PC-9 (cell line): ENCODE measurements at regions of chr1 and their contacts with region 1.

Region 1: GRCh38 chr1:233759605-233760004 is 144.9 kb upstream of the SLC35F3 start:
- DNase-seq: peak; percentile 2 to 79
- H3K4me3 ChIP-seq: no peak overlapping the region
- H3K27ac ChIP-seq: no peak overlapping the region
- H3K4me1 ChIP-seq: peaks cover 12% of the 10 kb centered on the region
- H3K27me3 ChIP-seq: no peaks in the 10 kb centered on the region
- CTCF ChIP-seq: no peak

Region 2: DNA sequence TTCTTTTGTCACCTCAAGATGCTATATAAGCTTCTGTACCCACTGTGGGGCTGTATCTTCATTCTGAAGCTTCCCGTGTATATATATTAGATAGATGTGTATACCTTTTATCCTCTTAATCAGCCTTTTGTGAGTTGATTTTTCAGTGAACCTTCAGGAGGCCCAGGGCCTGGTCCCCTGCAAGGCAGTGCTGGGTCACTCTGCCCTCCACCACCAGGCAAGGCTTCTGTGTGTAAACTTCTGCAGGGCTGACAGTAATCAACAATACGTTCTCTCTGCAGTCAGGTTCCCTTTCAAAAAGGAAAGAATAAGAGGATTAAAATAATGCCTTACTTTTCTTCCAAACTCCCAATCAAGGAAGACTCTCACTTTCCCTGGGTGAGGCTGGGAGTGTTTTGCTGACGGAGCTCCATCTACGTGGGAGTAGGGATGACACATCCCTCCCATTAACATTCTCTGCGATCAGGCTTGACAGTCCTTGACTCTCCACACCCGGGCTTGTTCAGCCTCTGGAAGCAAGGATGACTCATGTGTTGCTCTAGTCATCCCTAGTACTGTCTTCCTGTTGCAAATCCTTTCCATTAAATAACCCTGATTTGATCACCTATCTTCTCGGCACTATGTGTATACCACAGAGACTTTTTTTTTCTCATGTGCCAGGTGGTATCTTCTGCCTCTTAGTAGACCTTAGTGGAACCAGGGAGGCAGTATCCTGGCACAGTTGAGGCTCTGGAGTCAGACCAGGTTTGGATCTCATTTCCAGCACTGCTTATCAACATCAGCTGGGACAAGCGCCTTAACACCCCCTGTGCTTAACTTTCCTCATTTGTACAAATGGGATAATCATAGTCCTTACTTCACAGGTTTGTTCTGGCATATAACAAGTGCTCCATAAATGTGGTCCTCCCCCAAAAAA is 216.0 kb before region 1 on chr1:
- CTCF ChIA-PET with region 1: no interaction called
- POLR2A ChIA-PET with region 1: interaction called, 30 read pairs
- intact Hi-C with region 1: no loop called
- DNase-seq: peak; percentile 58 to 78
- H3K4me3 ChIP-seq: no peak overlapping the region
- H3K27ac ChIP-seq: no peak overlapping the region
- H3K4me1 ChIP-seq: 0 out of 2 replicates have a peak, but pooled peaks cover 8% of the 10 kb centered on the region
- H3K27me3 ChIP-seq: no peaks in the 10 kb centered on the region
- CTCF ChIP-seq: no peak

Region 3: GRCh38 chr1:233777566-233777965 is 18.0 kb after region 1 on chr1:
- CTCF ChIA-PET with region 1: no interaction called
- POLR2A ChIA-PET with region 1: interaction called, 15 read pairs
- intact Hi-C with region 1: no loop called
- DNase-seq: no peak
- H3K4me3 ChIP-seq: no peak overlapping the region
- H3K27ac ChIP-seq: no peak overlapping the region
- H3K4me1 ChIP-seq: no peaks in the 10 kb centered on the region
- H3K27me3 ChIP-seq: no peaks in the 10 kb centered on the region
- CTCF ChIP-seq: no peak